ENCODE measurements at regions of chr17 and their contacts with region 1.

Region 1: GRCh38 chr17:8798846-8799569 is at the start of gene MFSD6L:
- DNase-seq: peak; percentile 67 to 83
- H3K4me3 ChIP-seq: peak within 1 kb of the TSS; percentile 44 to 71 (median 56)
- H3K27ac ChIP-seq: no peak within 1 kb of the TSS; the same call in 1 of the 2 replicates
- H3K4me1 ChIP-seq: peaks cover 0 to 19% (median 9%) of the 10 kb centered on the region in 4 experiments; a peak in 6 of 7 replicates
- H3K27me3 ChIP-seq: peaks cover 0 to 6% (median 1%) of the 10 kb centered on the region in 4 experiments; a peak in 3 of 7 replicates
- CTCF ChIP-seq: peak; percentile 40 to 64 (median 47)
- EP300 ChIP-seq: 0 out of 3 replicates have a peak, but pooled peaks of 1 of the 2 experiments have one; percentile 49
- POLR2A ChIP-seq: no peak; a peak in 1 of 3 replicates
- RAD21 ChIP-seq: peak; percentile 64 to 72
- total RNA-seq, gene MFSD6L: 2.6 and 2.8 TPM in 2 replicates

Region 2: DNA sequence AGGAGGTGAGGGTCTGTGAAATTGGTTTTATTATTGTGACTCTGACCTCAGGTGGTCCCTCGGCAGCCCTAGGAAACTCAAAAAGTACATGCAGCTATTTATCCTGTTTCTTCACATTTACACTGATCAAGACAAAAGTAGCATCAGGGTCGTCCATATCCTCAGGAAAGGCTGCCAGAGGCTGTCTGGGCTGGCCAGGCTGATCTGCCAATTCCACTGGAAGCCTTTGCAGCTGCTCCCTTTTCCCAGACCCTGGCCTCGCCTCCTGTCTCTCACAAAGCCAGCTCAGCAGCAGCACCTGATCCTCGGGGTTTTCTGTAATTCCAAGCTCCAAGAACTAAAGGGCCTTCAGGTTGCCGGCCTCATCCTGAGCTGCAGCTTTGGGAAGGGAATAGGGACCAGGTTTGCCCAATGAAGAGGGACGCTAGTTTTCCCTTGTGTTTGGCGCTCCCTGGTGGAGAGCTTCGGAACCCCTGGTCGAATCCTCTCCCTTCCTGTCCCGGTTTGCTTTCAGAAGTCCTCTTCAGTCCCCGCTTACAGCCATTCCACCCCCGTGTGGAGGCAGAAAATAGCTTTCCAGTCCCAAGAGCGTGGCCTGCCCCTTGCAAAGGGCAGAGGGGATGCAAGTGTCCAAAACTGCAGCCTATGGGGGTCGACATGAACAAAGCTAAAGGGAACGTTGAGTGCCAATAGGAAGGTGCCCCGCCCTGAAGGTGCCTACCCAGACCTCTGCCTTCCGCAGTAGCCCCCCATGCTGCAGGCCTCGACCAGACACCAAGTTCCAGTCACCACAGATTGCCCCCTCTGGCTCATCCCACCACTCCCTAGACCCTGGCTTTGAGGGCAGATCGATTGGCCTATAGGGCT is 13.2 kb before region 1 on chr17:
- CTCF ChIA-PET with region 1: interaction called, 18 read pairs
- POLR2A ChIA-PET with region 1: interaction called, 4 read pairs
- DNase-seq: peak; percentile 78 to 99
- H3K4me3 ChIP-seq: no peak overlapping the region
- H3K27ac ChIP-seq: no peak overlapping the region
- H3K4me1 ChIP-seq: peaks cover 0 to 5% (median 3%) of the 10 kb centered on the region in 4 experiments; a peak in 5 of 7 replicates
- H3K27me3 ChIP-seq: no peaks in the 10 kb centered on the region; a peak in 2 of 7 replicates
- CTCF ChIP-seq: peak; percentile 75 to 93 (median 86)
- EP300 ChIP-seq: no peak
- POLR2A ChIP-seq: no peak
- RAD21 ChIP-seq: peak; percentile 92 to 94

Region 3: DNA sequence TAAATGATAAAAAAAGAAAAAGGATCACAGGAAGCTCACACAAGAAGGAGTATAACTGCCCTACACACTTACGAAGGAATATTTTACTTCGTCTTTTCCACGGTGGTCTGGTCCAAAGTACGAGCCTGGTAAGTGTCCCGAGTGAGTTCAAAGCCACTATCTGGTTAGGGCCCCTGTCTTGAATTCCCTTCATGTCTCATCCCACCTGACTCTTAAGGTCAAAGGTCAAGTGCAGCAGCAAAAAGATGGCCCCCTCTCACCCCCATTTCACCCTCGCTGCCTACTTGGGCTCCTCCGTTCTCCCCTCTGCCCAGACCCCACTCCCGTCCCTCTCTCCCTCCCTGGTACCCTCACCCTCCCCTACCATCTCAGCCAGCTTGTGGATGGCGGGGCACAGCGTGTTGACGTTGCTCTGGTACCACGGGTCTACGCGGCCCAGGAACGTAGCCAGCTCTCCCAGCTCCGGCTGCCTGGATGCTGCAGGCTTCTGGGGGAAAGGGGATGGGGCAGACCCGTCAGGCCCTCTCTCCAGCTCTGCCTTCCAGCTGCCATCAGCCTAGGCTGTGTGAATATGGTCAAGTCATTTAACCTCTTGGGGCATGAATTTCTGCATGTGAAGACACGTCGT is 27.9 kb after region 1 on chr17:
- CTCF ChIA-PET with region 1: interaction called, 33 read pairs
- POLR2A ChIA-PET with region 1: interaction called, 4 read pairs
- DNase-seq: peak in 1 of 2 experiments; percentile 38
- H3K4me3 ChIP-seq: no peak overlapping the region
- H3K27ac ChIP-seq: no peak overlapping the region
- H3K4me1 ChIP-seq: peaks cover 0 to 7% (median 0%) of the 10 kb centered on the region in 4 experiments; a peak in 4 of 7 replicates
- H3K27me3 ChIP-seq: no peaks in the 10 kb centered on the region
- CTCF ChIP-seq: no peak
- EP300 ChIP-seq: no peak
- POLR2A ChIP-seq: no peak
- RAD21 ChIP-seq: no peak

Region 4: DNA sequence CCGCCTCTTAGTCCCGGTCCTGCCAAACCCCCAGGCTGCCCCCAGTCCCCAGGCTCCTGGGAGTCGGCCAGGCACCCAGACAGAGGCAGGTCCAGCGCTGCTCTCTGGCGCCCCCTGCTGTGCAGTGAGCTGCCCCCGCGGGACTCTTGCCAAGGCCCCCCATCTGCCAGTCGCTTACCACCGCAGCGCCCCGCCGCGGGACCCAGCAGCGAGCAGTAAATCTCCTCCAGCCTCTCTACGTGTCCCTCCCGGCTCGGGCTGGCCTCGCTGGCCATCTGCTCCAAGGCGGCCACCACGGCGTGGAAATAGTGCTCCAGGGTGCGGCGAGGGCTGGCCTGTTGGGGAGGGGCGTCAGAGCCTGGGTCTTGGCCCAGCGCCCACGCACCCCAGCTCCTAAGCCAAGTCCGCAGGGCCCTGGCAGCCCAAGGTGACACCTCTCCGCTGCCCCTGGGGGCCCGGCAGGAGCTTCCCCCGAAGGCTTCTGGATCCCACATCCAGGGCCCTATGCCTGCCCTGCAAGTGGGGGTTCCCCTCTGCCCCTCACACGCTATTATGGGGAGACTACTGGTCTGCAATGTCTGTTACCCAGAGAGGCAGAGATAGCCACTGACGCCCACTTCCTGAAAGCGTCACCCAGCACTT is 33.8 kb after region 1 on chr17:
- CTCF ChIA-PET with region 1: interaction called, 33 read pairs
- POLR2A ChIA-PET with region 1: interaction called, 4 read pairs
- DNase-seq: peak; percentile 59 to 95
- H3K4me3 ChIP-seq: no peak overlapping the region
- H3K27ac ChIP-seq: no peak overlapping the region
- H3K4me1 ChIP-seq: peaks cover 0 to 5% (median 4%) of the 10 kb centered on the region in 4 experiments
- H3K27me3 ChIP-seq: no peaks in the 10 kb centered on the region
- CTCF ChIP-seq: peak; percentile 68 to 83 (median 69)
- EP300 ChIP-seq: no peak
- POLR2A ChIP-seq: no peak
- RAD21 ChIP-seq: peak; percentile 48 to 71

Region 5: GRCh38 chr17:8976638-8977037 is 177.6 kb after region 1 on chr17:
- CTCF ChIA-PET with region 1: no interaction called
- POLR2A ChIA-PET with region 1: no interaction called
- DNase-seq: no peak
- H3K4me3 ChIP-seq: no peak overlapping the region
- H3K27ac ChIP-seq: no peak overlapping the region
- H3K4me1 ChIP-seq: no peaks in the 10 kb centered on the region
- H3K27me3 ChIP-seq: no peaks in the 10 kb centered on the region
- CTCF ChIP-seq: no peak
- EP300 ChIP-seq: no peak
- POLR2A ChIP-seq: no peak
- RAD21 ChIP-seq: no peak